Ascending aorta (tissue), 2 donors: ENCODE measurements at regions of chr9 and their contacts with region 1.

Region 1: GRCh38 chr9:6566409-6567139 is 79.0 kb downstream of the GLDC start:
- DNase-seq: peak; percentile 40 to 88
- H3K4me3 ChIP-seq: peak overlapping the region in 1 of 2 donors; percentile 27
- H3K27ac ChIP-seq: peak overlapping the region; percentile 72 to 84
- H3K4me1 ChIP-seq: peaks cover 0 to 14% of the 10 kb centered on the region in 2 donors
- H3K27me3 ChIP-seq: no peaks in the 10 kb centered on the region
- CTCF ChIP-seq: no peak

Region 2: GRCh38 chr9:6383551-6384225 is 182.9 kb before region 1 on chr9:
- intact Hi-C with region 1: loop called (anchors 10 kb)
- DNase-seq: peak in 1 of 2 donors; percentile 65
- H3K4me3 ChIP-seq: no peak overlapping the region
- H3K27ac ChIP-seq: peak overlapping the region; percentile 73 to 74
- H3K4me1 ChIP-seq: peaks cover 4 to 5% of the 10 kb centered on the region in 2 donors
- H3K27me3 ChIP-seq: no peaks in the 10 kb centered on the region
- CTCF ChIP-seq: no peak

Region 3: GRCh38 chr9:6498982-6499381 is 67.6 kb before region 1 on chr9:
- intact Hi-C with region 1: loop called (anchors 10 kb)
- DNase-seq: no peak
- H3K4me3 ChIP-seq: no peak overlapping the region
- H3K27ac ChIP-seq: no peak overlapping the region
- H3K4me1 ChIP-seq: no peaks in the 10 kb centered on the region
- H3K27me3 ChIP-seq: no peaks in the 10 kb centered on the region
- CTCF ChIP-seq: no peak

Region 4: DNA sequence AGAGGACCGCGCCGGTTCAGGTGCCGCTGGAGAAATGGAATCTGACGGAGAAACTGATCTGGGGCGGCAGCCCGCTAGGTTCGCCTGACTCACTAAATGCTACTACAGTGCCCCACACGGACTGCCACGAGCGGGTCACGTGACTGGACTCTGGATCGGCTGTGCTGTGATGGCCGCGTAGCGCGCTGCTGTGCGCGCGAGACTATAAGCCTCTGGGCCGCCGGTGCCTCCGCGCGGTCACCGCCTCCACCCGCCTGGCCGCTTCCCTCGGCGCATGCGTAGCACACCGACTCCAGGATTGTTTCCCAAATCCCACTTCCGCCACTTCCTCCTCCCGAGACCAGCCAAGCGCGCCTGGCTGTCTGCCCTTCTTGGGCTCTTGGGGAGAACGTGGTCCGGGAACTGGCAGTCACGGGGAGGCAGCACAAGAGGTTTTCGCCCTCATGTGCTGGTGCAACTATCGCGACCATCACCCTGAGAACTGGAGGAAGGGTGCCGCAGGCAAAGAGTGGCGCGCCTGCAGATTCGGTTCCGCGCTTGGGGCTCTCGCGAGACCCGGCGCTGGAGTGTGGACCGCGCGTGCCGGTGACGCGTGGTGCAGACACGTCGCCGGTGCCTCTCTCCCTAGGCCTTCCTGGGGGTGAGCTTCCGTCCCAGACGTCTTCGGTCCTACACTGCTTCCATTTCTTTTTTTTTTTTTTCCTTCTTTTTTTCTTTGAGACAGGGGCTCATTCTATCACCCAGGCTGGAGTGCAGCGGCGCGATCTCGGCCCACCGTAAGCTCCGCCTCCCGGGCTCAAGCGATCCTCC is 114.8 kb after region 1 on chr9:
- intact Hi-C with region 1: loop called (anchors 5 kb)
- DNase-seq: peak; percentile 90 to 98
- H3K4me3 ChIP-seq: peak overlapping the region; percentile 71 to 72
- H3K27ac ChIP-seq: peak overlapping the region; percentile 95 to 96
- H3K4me1 ChIP-seq: peaks cover 0 to 10% of the 10 kb centered on the region in 2 donors
- H3K27me3 ChIP-seq: no peaks in the 10 kb centered on the region
- CTCF ChIP-seq: peak in 1 of 3 experiments; percentile 6